ENCODE measurements at regions of chr10 and their contacts with region 1.

Region 1: GRCh38 chr10:62437696-62438095 is 63.5 kb downstream of the ZNF365 start:
- DNase-seq: no peak
- ATAC-seq: peak in 1 of 2 donors; percentile 50

Region 2: GRCh38 chr10:62248465-62248864 is 189.2 kb before region 1 on chr10:
- intact Hi-C with region 1: no loop called
- DNase-seq: no peak
- ATAC-seq: no peak

Region 3: DNA sequence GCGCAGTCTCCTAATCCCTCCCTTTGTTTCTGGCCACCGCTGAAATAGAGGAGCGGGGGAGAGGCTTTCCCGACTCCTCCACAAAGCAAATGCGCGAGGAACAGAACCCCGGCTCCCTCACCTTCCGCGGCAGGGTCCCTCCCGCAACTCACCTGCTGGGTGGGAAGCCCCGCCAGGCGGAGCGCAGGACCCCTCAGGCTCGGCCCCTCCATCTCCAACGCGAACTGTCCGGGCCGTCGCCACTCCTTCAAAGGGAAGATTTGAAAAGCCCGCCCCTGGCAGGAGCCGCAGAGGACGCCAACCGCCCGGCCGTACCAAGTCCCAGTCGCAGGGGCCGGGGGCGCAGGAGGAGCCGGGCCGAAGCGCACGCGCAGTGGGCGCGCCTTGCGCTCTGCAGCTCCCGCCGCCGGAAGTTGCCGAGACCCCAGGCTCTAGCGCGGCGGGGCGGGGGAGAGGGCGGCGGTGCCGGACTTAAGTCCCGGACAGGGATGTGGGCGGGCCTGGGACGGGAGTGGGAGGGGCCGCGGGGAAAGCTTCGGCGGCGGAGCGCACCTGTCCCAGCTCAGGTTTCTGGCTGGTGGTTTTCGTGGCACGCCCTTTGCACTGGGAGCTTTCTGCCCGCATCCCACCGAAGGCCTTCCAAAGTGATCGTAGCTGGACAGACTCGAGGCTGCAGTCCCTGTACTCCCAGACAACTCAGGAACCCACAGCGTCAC is 169.1 kb before region 1 on chr10 and contains the start of gene RTKN2:
- intact Hi-C with region 1: loop called in 1 of 2 experiments (anchors 10 kb)
- DNase-seq: peak; percentile 69
- ATAC-seq: peak; percentile 94 to 96
- total RNA-seq, gene RTKN2: 0.13 TPM in 1 of 2 donors, not detected in the other

Region 4: DNA sequence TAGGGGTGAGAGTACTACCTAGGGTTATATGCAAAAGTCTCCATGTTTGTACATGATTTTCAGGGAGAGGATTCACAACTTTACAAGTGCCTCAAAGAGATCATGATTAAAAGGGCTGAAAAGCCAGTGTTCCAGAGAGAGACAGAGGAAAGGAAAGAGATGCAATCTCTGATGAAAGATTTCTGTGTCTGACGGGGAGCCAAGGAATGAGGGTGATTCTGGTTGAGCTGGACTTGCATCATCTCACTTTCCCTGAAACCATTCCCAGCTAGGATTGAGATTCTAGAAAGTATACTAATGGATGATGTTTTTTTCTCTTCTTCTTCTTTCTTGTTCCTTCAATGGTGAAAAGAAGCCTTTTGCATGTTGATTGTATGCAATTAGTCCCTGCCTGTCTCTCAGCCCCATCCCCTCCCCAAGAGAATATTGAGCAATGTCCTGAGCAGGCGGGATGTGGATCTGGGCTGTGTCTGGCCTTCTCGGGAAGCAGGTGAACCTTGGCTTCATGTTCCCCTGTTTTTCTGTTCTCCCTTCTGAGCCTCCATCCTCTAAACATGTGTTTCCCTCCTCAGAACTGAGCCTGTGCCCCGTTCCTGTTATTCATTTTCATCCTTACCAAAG is 122.6 kb after region 1 on chr10:
- intact Hi-C with region 1: loop called in 1 of 2 experiments (anchors 10 kb)
- DNase-seq: no peak
- ATAC-seq: no peak

Region 5: GRCh38 chr10:63083904-63084689 is 646.4 kb after region 1 on chr10:
- intact Hi-C with region 1: loop called in 1 of 2 experiments (anchors 2 kb)
- DNase-seq: peak; percentile 73
- ATAC-seq: peak; percentile 91 to 94

Region 6: DNA sequence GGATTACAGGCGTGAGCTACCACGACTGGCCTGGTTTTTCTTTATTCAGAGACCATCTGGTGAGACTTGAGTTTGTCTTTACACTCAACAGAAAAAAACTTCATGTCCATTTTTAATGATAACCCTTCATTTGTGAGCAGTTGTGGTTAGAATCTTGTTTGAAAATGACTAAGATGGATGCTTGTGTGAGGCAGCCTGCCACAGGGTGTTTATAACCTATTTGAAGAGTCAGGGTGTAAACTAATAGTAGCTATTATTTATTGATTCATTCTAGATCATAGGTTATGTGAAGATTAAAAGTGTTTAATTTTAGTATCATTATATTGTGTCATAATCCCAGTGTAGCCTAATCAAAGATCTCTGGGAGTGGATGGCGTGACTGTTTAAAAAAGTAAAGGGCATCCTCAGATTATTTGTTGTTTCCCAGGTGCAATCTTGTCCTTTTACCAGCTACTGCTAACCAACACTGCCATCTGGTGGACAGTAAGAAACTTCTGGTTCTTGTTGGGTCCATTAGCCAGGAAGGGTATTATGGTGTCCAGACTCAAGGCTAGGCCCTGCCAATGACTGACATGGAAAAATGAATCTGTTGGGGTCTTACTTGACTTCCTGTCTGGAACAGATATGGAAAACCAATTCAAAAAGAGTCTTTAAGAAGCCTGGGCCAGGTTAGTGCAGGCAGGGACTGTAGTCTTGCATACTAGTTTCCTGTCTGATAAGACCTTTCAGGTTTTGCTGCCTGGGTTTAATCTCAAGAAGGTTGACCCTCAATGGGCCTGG is 720.3 kb after region 1 on chr10:
- intact Hi-C with region 1: loop called (anchors 5 kb)
- DNase-seq: no peak
- ATAC-seq: peak; percentile 74 to 78

Measured in left cardiac atrium (tissue), 4 donors.